Prostate gland (tissue), 2 donors: ENCODE measurements at regions of chr1 and their contacts with region 1.

Region 1: GRCh38 chr1:55584526-55585401 is 369.6 kb upstream of the USP24 start:
- DNase-seq: no peak
- H3K4me3 ChIP-seq: no peak overlapping the region
- H3K27ac ChIP-seq: peak overlapping the region; percentile 4 to 34
- H3K4me1 ChIP-seq: no peaks in the 10 kb centered on the region
- H3K27me3 ChIP-seq: no peaks in the 10 kb centered on the region
- CTCF ChIP-seq: no peak
- POLR2A ChIP-seq: no peak

Region 2: DNA sequence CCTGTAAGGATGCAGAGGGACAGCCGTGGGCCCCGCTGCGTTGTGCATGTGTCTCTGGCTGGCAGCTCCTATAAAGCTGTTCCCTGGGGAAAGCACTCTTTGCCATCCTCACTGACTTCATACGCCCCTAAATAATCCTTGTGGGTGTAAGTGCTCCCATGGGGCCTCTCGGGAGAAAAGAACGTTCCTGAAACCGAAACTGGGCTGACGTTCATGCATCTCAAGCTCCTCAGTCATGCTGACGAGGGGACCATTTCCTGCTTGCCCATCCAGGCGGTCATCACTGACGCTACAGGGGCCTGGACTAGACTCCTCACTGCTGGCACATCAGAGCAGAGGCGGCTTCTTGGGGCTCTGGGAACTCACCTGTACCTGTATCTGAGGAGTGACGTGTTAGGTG is 296.5 kb before region 1 on chr1:
- intact Hi-C with region 1: no loop called
- DNase-seq: no peak
- H3K4me3 ChIP-seq: no peak overlapping the region
- H3K27ac ChIP-seq: no peak overlapping the region
- H3K4me1 ChIP-seq: no peaks in the 10 kb centered on the region
- H3K27me3 ChIP-seq: no peaks in the 10 kb centered on the region
- CTCF ChIP-seq: no peak
- POLR2A ChIP-seq: no peak

Region 3: DNA sequence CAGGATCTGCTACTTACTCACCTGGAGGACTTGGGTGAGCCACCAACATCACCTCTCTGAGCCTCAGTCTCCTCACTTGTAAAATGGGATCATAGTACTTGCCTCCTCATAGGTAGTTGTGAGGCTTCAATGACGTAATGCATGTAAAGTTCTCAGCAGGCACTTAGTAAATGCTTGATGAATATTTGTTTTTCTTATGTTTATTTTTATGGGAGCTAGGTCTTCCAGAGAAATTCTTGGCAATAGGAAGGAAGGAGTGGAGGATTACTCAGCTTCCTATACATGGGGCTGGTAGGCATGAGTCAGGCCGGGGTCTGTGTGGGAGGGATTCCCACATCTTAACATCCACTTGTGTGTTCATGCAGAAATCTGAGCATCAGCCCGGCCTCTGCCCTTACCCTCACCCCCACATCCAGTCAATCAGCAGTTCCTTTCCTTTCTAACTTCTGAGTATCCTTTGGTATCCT is 274.2 kb before region 1 on chr1:
- intact Hi-C with region 1: no loop called
- DNase-seq: no peak
- H3K4me3 ChIP-seq: no peak overlapping the region
- H3K27ac ChIP-seq: no peak overlapping the region
- H3K4me1 ChIP-seq: no peaks in the 10 kb centered on the region
- H3K27me3 ChIP-seq: no peaks in the 10 kb centered on the region
- CTCF ChIP-seq: no peak
- POLR2A ChIP-seq: no peak

Region 4: GRCh38 chr1:55443175-55443915 is 141.4 kb before region 1 on chr1:
- intact Hi-C with region 1: loop called (anchors 5 kb)
- DNase-seq: peak; percentile 10
- H3K4me3 ChIP-seq: no peak overlapping the region
- H3K27ac ChIP-seq: peak overlapping the region; percentile 47 to 53
- H3K4me1 ChIP-seq: no peaks in the 10 kb centered on the region
- H3K27me3 ChIP-seq: no peaks in the 10 kb centered on the region
- CTCF ChIP-seq: no peak
- POLR2A ChIP-seq: no peak

Region 5: DNA sequence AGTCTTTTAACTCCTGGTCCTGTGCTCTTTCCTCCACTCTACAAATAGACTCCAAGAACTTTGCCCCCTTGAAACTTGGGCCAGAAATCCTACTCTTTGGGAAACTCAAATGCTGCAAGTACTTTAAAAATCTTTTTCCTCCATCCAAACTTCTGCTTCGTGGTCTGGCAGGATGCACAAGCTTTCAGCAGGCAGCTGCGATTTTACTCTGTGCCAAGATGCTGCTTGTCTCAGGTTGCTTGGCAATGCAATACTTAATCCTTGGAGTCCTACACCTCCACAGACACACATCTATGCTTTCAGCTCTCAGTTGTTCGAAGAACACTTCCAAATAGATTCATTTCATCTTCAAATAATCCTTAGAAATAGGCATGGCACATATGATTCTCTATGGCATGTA is 65.7 kb after region 1 on chr1:
- intact Hi-C with region 1: loop called (anchors 5 kb)
- DNase-seq: no peak
- H3K4me3 ChIP-seq: no peak overlapping the region
- H3K27ac ChIP-seq: no peak overlapping the region
- H3K4me1 ChIP-seq: no peaks in the 10 kb centered on the region
- H3K27me3 ChIP-seq: no peaks in the 10 kb centered on the region
- CTCF ChIP-seq: no peak
- POLR2A ChIP-seq: no peak